Naive thymus-derived CD4-positive, alpha-beta T cell (primary cell): ENCODE measurements at regions of chr11 and their contacts with region 1.

Region 1: GRCh38 chr11:45885274-45885920 is at the start of gene MAPK8IP1:
- DNase-seq: peak; percentile 15 to 71 (median 50)
- ATAC-seq: peak; percentile 90
- H3K4me3 ChIP-seq: peak within 1 kb of the TSS; percentile 51
- H3K4me3 Mint-ChIP-seq: peak within 1 kb of the TSS; percentile 64 to 85 (median 73)
- H3K27ac ChIP-seq: no peak within 1 kb of the TSS
- H3K27ac Mint-ChIP-seq: peak within 1 kb of the TSS in 2 of 9 donors; percentile 40 to 69
- H3K4me1 ChIP-seq: no peaks in the 10 kb centered on the region
- H3K4me1 Mint-ChIP-seq: peaks cover 7 to 15% (median 10%) of the 10 kb centered on the region in 7 donors
- H3K27me3 ChIP-seq: no peaks in the 10 kb centered on the region
- H3K27me3 Mint-ChIP-seq: peaks cover 0 to 21% (median 4%) of the 10 kb centered on the region in 5 donors
- total RNA-seq, gene MAPK8IP1: 0.65 to 7.0 (median 0.92) TPM

Region 2: DNA sequence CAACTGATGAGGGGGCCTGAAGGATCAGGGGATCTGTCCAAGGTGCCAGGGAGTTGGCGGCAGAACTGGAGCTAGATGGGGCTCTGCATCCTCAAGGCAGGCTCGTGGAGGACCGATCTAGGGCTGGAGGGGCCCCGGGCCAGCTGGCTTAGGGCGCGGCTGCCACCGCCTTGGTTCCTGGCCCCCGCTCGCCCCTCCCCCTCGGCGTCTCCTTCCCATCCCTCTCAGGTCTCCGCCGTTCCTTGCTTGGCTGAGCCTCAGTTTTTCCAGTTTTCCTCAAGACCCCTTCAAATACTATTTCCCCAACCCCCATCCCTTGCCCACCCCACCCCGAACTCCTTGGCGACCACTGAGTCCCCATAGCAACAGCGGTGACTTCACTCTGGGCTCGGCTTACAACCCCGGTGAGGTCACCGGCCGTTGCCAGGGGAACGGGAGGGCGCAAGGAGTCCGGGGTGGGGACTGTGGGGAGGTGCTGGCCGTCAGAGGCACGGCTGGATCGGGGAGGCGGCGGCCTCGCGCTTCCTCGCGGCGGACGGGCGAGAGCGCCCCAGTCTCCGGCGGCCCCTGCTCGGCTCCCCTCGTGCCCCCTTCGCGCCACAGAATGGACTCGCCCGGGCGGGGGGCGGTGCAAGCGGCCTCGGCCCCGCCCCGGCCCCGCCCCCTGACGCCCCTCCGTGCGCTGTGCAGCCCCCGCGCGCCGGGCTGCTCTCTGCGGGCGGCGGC is 14.2 kb after region 1 on chr11:
- CTCF ChIA-PET with region 1: no interaction called
- POLR2A ChIA-PET with region 1: no interaction called
- intact Hi-C with region 1: loop called (anchors 1 kb)
- DNase-seq: peak in 6 of 9 donors; percentile 19 to 70 (median 42)
- ATAC-seq: peak; percentile 83
- H3K4me3 ChIP-seq: peak overlapping the region; percentile 37
- H3K4me3 Mint-ChIP-seq: peak overlapping the region; percentile 35 to 79 (median 64)
- H3K27ac ChIP-seq: peak overlapping the region; percentile 21
- H3K27ac Mint-ChIP-seq: no peak overlapping the region
- H3K4me1 ChIP-seq: peaks cover 7 to 9% of the 10 kb centered on the region in 2 donors
- H3K4me1 Mint-ChIP-seq: peaks cover 0 to 9% (median 4%) of the 10 kb centered on the region in 7 donors
- H3K27me3 ChIP-seq: peaks cover 0 to 5% of the 10 kb centered on the region in 2 donors
- H3K27me3 Mint-ChIP-seq: peaks cover 25 to 48% (median 35%) of the 10 kb centered on the region in 5 donors